ENCODE measurements at regions of chr3 and their contacts with region 1.

Region 1: GRCh38 chr3:14402304-14402811 is at the start of gene SLC6A6:
- DNase-seq: peak; percentile 95 to 96
- H3K4me3 ChIP-seq: peak within 1 kb of the TSS; percentile 50
- H3K4me3 Mint-ChIP-seq: peak within 1 kb of the TSS; percentile 100
- H3K27ac Mint-ChIP-seq: peak within 1 kb of the TSS; percentile 97
- H3K4me1 ChIP-seq: peaks cover 10% of the 10 kb centered on the region; the same call in 1 of the 2 replicates
- H3K4me1 Mint-ChIP-seq: peaks cover 10% of the 10 kb centered on the region
- H3K27me3 ChIP-seq: no peaks in the 10 kb centered on the region
- H3K27me3 Mint-ChIP-seq: no peaks in the 10 kb centered on the region
- CTCF ChIP-seq: peak; percentile 50 to 75
- total RNA-seq, gene SLC6A6: 49.6 and 55.3 TPM in 2 replicates

Region 2: GRCh38 chr3:14289590-14290461 is 112.5 kb before region 1 on chr3:
- CTCF ChIA-PET with region 1: interaction called, 3 read pairs
- POLR2A ChIA-PET with region 1: no interaction called
- intact Hi-C with region 1: loop called (anchors 10 kb)
- DNase-seq: peak; percentile 50 to 52
- H3K4me3 ChIP-seq: no peak overlapping the region
- H3K4me3 Mint-ChIP-seq: peak overlapping the region; percentile 64
- H3K27ac Mint-ChIP-seq: peak overlapping the region; percentile 95
- H3K4me1 ChIP-seq: peaks cover 50% of the 10 kb centered on the region
- H3K4me1 Mint-ChIP-seq: peaks cover 32% of the 10 kb centered on the region
- H3K27me3 ChIP-seq: no peaks in the 10 kb centered on the region
- H3K27me3 Mint-ChIP-seq: no peaks in the 10 kb centered on the region
- CTCF ChIP-seq: no peak

Region 3: GRCh38 chr3:14305324-14305723 is 97.0 kb before region 1 on chr3:
- CTCF ChIA-PET with region 1: no interaction called
- POLR2A ChIA-PET with region 1: no interaction called
- intact Hi-C with region 1: no loop called
- DNase-seq: no peak
- H3K4me3 ChIP-seq: no peak overlapping the region
- H3K4me3 Mint-ChIP-seq: no peak overlapping the region
- H3K27ac Mint-ChIP-seq: peak overlapping the region; percentile 69
- H3K4me1 ChIP-seq: peaks cover 25% of the 10 kb centered on the region
- H3K4me1 Mint-ChIP-seq: peaks cover 33% of the 10 kb centered on the region
- H3K27me3 ChIP-seq: no peaks in the 10 kb centered on the region
- H3K27me3 Mint-ChIP-seq: no peaks in the 10 kb centered on the region
- CTCF ChIP-seq: no peak

Region 4: GRCh38 chr3:14335774-14336756 is 66.3 kb before region 1 on chr3:
- CTCF ChIA-PET with region 1: no interaction called
- POLR2A ChIA-PET with region 1: no interaction called
- intact Hi-C with region 1: no loop called
- DNase-seq: no peak
- H3K4me3 ChIP-seq: no peak overlapping the region
- H3K4me3 Mint-ChIP-seq: no peak overlapping the region
- H3K27ac Mint-ChIP-seq: no peak overlapping the region
- H3K4me1 ChIP-seq: peaks cover 12% of the 10 kb centered on the region
- H3K4me1 Mint-ChIP-seq: peaks cover 4% of the 10 kb centered on the region
- H3K27me3 ChIP-seq: no peaks in the 10 kb centered on the region
- H3K27me3 Mint-ChIP-seq: no peaks in the 10 kb centered on the region
- CTCF ChIP-seq: no peak

Region 5: DNA sequence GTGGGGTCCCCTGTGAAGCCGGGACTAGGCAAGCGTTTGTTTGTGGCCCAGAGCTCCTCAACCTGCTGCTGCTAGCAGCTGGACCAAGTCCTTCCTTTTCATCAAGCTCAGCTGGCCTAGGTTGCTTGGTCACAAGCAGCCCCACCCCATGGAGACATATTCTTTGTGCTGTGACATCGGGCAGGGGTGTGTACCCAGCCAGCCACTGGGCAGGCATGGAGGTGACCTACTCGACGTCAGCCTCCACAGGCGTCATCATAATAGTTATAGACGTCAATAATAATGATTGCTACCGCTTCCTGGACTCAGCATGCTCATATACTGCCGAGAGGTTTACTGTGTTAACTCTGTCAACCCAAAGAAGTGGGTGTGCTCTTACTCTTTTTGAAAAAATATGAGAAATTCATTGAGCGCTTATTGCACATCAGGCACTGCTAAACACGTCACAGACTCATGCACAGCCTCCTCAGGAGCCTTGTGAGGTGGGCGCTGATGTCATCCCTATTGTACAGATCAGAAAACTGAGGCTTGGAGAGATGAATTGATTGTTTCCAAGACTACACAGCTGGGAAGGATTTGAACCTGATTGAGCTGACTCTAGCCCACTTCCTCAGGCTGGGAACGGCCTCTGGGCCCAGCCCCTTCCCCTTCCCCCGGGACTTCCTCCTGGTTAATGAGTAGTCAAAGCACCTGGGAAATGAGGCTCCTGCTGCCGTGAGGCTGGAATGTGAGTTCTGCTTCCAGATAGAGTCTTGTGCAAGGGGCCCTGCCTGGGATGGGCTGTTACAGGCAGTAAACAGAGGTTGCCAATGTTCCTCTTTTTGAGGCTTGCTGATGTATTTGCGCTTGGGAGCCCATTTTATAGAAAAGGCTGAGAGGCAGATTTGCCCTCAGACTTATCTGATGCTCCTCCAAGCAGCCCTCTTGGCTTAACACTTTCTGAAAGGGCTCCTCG is 16.2 kb after region 1 on chr3:
- CTCF ChIA-PET with region 1: interaction called, 4 read pairs
- POLR2A ChIA-PET with region 1: interaction called, 4 read pairs
- intact Hi-C with region 1: loop called (anchors 1 kb)
- DNase-seq: peak; percentile 89
- H3K4me3 ChIP-seq: no peak overlapping the region
- H3K4me3 Mint-ChIP-seq: peak overlapping the region; percentile 35
- H3K27ac Mint-ChIP-seq: peak overlapping the region; percentile 88
- H3K4me1 ChIP-seq: peaks cover 37% of the 10 kb centered on the region
- H3K4me1 Mint-ChIP-seq: peaks cover 19% of the 10 kb centered on the region
- H3K27me3 ChIP-seq: no peaks in the 10 kb centered on the region
- H3K27me3 Mint-ChIP-seq: no peaks in the 10 kb centered on the region
- CTCF ChIP-seq: no peak

Region 6: DNA sequence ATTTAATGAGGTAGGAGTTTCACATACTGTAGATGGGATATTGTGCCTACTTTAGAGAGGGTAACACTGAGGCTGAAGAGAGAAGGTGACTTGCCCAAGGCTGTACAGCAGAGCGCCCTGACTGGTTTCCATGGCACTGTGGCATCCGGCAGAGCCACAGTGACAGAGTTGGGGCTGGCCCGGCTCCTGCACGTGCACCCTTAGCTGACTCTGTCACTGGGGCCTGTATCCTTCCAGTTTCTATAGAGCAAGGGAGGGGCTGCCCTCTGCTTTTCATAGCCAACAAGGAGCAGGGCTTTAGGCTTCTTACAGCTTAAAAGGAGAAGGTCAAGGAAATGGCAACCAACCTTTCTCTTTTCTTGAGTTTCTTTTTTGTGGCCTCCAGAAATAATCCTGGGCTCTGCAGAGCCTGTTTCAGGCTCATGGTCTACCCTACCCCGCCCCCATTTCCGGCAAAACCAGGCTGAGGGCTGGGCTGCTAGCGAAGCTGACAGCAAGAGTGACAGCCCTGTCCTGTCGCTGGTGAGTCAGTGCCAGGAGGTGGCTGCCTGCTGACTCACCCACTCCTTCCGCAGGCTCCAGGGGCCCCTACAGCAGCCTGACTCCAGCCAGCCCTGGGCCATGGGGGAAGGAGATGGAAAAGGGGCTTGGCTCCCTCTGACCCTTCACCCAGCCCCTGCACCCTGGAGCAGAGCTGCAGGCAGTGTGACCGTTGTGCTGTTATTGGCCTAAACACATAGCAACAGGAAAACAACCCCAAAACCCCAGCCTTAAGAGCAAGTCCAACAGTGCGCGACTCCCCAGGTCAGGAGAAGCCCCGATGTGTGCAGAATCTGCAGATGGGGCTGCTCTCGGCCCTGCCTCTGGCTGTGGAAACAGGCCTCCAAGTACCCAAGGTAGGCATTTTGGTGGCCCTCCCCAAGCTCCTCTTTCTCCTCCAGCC is 29.8 kb after region 1 on chr3:
- CTCF ChIA-PET with region 1: interaction called, 3 read pairs
- POLR2A ChIA-PET with region 1: no interaction called
- intact Hi-C with region 1: loop called (anchors 1 kb)
- DNase-seq: peak; percentile 82 to 88
- H3K4me3 ChIP-seq: no peak overlapping the region
- H3K4me3 Mint-ChIP-seq: no peak overlapping the region
- H3K27ac Mint-ChIP-seq: peak overlapping the region; percentile 90
- H3K4me1 ChIP-seq: peaks cover 18% of the 10 kb centered on the region
- H3K4me1 Mint-ChIP-seq: peaks cover 19% of the 10 kb centered on the region
- H3K27me3 ChIP-seq: no peaks in the 10 kb centered on the region
- H3K27me3 Mint-ChIP-seq: no peaks in the 10 kb centered on the region
- CTCF ChIP-seq: no peak

Region 7: DNA sequence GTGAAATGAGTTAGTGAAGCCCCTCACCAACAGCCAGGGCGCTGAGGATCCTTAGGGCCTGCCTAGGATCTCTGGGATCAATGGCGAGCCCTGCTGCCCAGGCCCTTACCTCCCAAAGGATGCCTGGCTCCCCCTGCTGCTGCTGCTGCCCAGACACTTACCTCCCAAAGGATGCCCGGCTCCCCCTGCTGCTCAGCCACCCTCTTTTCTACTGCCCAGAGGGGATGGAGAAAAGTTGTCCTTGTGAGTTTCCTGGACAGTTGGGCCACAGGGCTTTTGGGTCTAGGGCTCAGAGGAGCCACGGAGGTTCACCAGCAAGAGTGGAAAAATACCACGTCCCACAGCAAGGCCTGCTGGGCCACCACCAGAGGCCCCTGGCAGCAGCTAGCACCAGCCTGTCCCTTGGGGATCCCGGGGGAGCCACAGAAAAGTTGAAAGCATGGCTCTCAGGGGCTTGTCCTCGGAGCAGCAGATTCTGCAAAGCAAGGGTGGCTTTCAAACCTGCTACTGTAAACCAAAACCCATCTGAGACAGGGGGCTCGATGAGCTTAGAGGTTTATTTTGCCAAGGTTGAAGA is 59.5 kb after region 1 on chr3:
- CTCF ChIA-PET with region 1: interaction called, 5 read pairs
- POLR2A ChIA-PET with region 1: no interaction called
- intact Hi-C with region 1: loop called (anchors 1 kb)
- DNase-seq: peak; percentile 74 to 78
- H3K4me3 ChIP-seq: no peak overlapping the region
- H3K4me3 Mint-ChIP-seq: no peak overlapping the region
- H3K27ac Mint-ChIP-seq: peak overlapping the region; percentile 70
- H3K4me1 ChIP-seq: no peaks in the 10 kb centered on the region
- H3K4me1 Mint-ChIP-seq: no peaks in the 10 kb centered on the region
- H3K27me3 ChIP-seq: no peaks in the 10 kb centered on the region
- H3K27me3 Mint-ChIP-seq: no peaks in the 10 kb centered on the region
- CTCF ChIP-seq: peak; percentile 65 to 95

Measured in Caco-2 (cell line).